ENCODE measurements at regions of chr7 and their contacts with region 1.

Region 1: GRCh38 chr7:140673063-140673773 is 473 bp downstream of the ADCK2 start:
- DNase-seq: peak; percentile 68 to 78 (median 74)
- H3K4me3 ChIP-seq: peak overlapping the region; percentile 61 to 65
- H3K4me3 Mint-ChIP-seq: peak overlapping the region; percentile 81 to 95 (median 88)
- H3K27ac ChIP-seq: peak overlapping the region; percentile 74
- H3K27ac Mint-ChIP-seq: peak overlapping the region; percentile 82 to 94 (median 92)
- H3K4me1 ChIP-seq: peaks cover 28% of the 10 kb centered on the region
- H3K4me1 Mint-ChIP-seq: peaks cover 17 to 42% (median 22%) of the 10 kb centered on the region in 4 donors
- H3K27me3 ChIP-seq: no peaks in the 10 kb centered on the region
- H3K27me3 Mint-ChIP-seq: no peaks in the 10 kb centered on the region

Region 2: GRCh38 chr7:140463111-140463510 is 210.1 kb before region 1 on chr7:
- CTCF ChIA-PET with region 1: no interaction called
- POLR2A ChIA-PET with region 1: no interaction called
- intact Hi-C with region 1: no loop called
- DNase-seq: no peak
- H3K4me3 ChIP-seq: no peak overlapping the region
- H3K4me3 Mint-ChIP-seq: no peak overlapping the region
- H3K27ac ChIP-seq: no peak overlapping the region
- H3K27ac Mint-ChIP-seq: peak overlapping the region in 1 of 7 donors; percentile 17
- H3K4me1 ChIP-seq: no peaks in the 10 kb centered on the region
- H3K4me1 Mint-ChIP-seq: peaks cover 8 to 15% (median 12%) of the 10 kb centered on the region in 4 donors
- H3K27me3 ChIP-seq: no peaks in the 10 kb centered on the region
- H3K27me3 Mint-ChIP-seq: no peaks in the 10 kb centered on the region

Region 3: DNA sequence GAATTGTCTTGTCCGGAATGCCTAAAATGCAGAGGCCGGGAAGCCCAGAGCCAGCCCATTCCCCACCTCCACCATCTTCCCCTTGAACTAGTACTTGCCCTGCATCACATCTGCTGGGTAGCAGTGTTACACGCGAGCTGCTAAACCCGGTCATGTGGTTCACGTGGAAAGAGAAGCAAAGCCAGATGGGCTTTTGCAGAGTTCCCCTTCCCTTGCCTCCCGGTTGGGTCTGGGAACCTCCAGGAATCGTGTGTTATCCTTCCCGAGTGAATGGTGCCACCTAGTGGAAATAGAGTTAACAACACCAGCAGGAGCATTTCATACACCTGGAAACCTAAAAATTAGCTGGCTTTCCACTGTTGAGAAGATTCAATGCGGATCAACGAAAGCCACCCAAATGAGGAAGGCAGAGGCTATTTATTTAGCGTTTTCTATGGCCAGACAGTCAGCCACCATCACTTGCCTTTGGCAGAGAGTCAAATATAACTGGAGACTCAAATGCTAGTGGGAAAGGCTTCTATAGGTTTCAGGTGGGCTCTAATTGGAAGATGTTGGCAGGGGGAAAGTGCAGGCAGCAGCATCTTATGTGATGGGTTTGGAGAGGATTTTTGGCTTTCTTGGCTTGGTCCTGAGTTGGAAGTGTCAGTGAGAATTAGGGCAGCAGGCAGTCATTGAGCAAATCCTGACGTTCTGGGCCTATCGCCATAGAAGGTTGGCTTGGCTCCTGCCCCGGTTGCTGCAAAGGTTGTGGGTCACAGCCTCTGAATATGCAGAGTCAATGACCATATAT is 19.7 kb before region 1 on chr7:
- CTCF ChIA-PET with region 1: interaction called, 12 read pairs
- POLR2A ChIA-PET with region 1: interaction called, 11 read pairs
- intact Hi-C with region 1: no loop called
- DNase-seq: peak in 4 of 5 donors; percentile 40 to 57 (median 45)
- H3K4me3 ChIP-seq: no peak overlapping the region
- H3K4me3 Mint-ChIP-seq: peak overlapping the region in 2 of 8 donors; percentile 24 to 39
- H3K27ac ChIP-seq: no peak overlapping the region
- H3K27ac Mint-ChIP-seq: no peak overlapping the region
- H3K4me1 ChIP-seq: peaks cover 17% of the 10 kb centered on the region
- H3K4me1 Mint-ChIP-seq: peaks cover 18 to 24% (median 20%) of the 10 kb centered on the region in 4 donors
- H3K27me3 ChIP-seq: no peaks in the 10 kb centered on the region
- H3K27me3 Mint-ChIP-seq: peaks cover 3 to 12% of the 10 kb centered on the region in 2 donors

Region 4: GRCh38 chr7:140696680-140697446 is 23.6 kb after region 1 on chr7 and contains the start of gene NDUFB2:
- CTCF ChIA-PET with region 1: interaction called, 3 read pairs
- POLR2A ChIA-PET with region 1: interaction called, 57 read pairs
- intact Hi-C with region 1: loop called (anchors 1 kb)
- DNase-seq: peak; percentile 84 to 90 (median 90)
- H3K4me3 ChIP-seq: peak within 1 kb of the TSS; percentile 66 to 92
- H3K4me3 Mint-ChIP-seq: peak within 1 kb of the TSS; percentile 93 to 98 (median 97)
- H3K27ac ChIP-seq: peak within 1 kb of the TSS; percentile 89
- H3K27ac Mint-ChIP-seq: peak within 1 kb of the TSS; percentile 96 to 100 (median 98)
- H3K4me1 ChIP-seq: peaks cover 32% of the 10 kb centered on the region
- H3K4me1 Mint-ChIP-seq: peaks cover 18 to 48% (median 33%) of the 10 kb centered on the region in 4 donors
- H3K27me3 ChIP-seq: no peaks in the 10 kb centered on the region
- H3K27me3 Mint-ChIP-seq: no peaks in the 10 kb centered on the region
- total RNA-seq, gene NDUFB2: 94.4 to 98.6 TPM

Region 5: DNA sequence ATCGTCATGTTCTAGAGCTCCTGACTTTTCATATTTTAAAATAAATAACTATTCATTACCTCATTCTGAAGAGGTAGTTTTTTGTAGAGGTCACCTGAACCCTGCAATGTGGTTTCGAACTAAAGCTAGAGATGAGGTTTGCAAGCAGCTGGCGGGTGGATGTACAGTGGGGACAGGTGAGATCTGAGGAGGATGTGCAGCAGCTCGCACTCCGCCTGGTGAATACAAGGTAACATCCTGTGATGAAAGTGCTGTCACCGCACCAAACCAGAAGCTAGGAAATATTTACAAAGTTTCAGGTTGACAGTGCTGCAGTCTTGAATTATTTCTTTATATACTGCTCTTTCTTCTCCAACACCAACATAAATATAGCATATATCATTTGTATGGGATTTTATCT is 49.8 kb after region 1 on chr7:
- CTCF ChIA-PET with region 1: interaction called, 3 read pairs
- POLR2A ChIA-PET with region 1: interaction called, 13 read pairs
- intact Hi-C with region 1: no loop called
- DNase-seq: peak; percentile 24 to 56 (median 38)
- H3K4me3 ChIP-seq: no peak overlapping the region
- H3K4me3 Mint-ChIP-seq: peak overlapping the region in 1 of 8 donors; percentile 29
- H3K27ac ChIP-seq: peak overlapping the region; percentile 17
- H3K27ac Mint-ChIP-seq: peak overlapping the region; percentile 22 to 89 (median 44)
- H3K4me1 ChIP-seq: peaks cover 15% of the 10 kb centered on the region
- H3K4me1 Mint-ChIP-seq: peaks cover 11 to 18% (median 15%) of the 10 kb centered on the region in 4 donors
- H3K27me3 ChIP-seq: no peaks in the 10 kb centered on the region
- H3K27me3 Mint-ChIP-seq: no peaks in the 10 kb centered on the region

Measured in CD4-positive, alpha-beta memory T cell (primary cell).